ENCODE measurements at regions of chr1 and their contacts with region 1.

Region 1: DNA sequence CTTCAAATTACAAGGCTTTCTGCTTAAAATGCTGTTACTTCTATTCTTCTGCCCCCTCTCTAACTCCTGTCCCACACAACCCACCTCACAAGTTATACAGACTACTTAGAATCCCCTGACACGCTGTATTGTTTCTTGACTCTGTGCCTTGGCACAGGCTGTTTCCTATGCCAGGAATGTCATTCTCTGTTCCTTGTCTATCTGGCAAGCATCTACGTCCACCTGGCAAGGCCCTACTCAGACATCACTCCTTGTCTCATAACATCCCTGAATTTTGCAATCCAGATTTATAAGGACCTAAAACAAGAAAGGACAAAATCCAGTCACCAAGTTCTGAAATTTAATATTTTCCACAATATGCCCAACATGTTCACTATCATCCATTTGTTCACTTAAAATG is 182.0 kb upstream of the CHRM3 start:
- ATAC-seq: no peak
- H3K4me3 ChIP-seq: no peak overlapping the region
- H3K27ac ChIP-seq: no peak overlapping the region
- H3K4me1 ChIP-seq: peaks cover under 1 to 3% of the 10 kb centered on the region in 2 donors

Region 2: DNA sequence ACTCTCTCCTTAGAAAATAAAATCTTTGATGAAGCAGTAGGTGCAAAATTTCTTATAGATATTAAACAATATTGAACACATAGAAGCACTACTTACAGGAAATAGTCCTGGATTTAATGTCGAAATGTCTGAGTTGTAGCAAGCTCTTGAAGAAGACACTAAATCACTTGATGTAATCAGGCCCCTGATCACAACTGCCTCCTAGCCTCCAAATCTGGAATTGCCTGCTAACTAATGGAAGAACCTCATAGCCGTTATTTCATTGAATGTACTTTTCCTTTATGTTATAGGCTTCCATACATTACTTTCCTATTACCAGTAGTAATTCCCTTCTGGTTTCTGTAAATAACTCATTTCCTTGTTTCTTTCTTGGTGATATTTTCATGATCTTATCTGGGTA is 493.7 kb before region 1 on chr1:
- in situ Hi-C with region 1: no loop called
- ATAC-seq: no peak
- H3K4me3 ChIP-seq: no peak overlapping the region
- H3K27ac ChIP-seq: no peak overlapping the region
- H3K4me1 ChIP-seq: no peaks in the 10 kb centered on the region

Region 3: GRCh38 chr1:239262538-239262937 is 58.1 kb after region 1 on chr1:
- in situ Hi-C with region 1: loop called in 1 of 9 experiments (anchors 10 kb)
- ATAC-seq: no peak
- H3K4me3 ChIP-seq: no peak overlapping the region
- H3K27ac ChIP-seq: no peak overlapping the region
- H3K4me1 ChIP-seq: peaks cover 10 to 32% of the 10 kb centered on the region in 2 donors

Region 4: DNA sequence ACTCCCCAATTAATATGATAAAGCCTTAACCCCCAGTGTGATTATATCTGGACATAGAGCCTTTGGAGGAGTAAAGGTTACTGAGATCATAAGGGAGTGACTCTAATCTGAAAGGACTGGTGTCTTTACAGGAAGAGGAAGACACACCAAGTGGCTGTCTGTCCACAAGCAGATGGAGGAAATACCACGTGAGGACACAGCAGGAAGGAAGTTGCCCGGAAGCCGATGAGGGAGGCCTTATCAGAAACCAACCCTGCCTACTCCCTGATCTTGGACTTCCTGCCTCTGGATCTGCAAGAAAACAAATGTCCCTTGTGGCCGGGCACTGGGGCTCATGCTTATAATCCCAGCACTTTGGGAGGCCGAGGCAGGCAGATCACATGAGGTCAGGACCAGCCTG is 71.7 kb after region 1 on chr1:
- in situ Hi-C with region 1: no loop called
- ATAC-seq: no peak
- H3K4me3 ChIP-seq: no peak overlapping the region
- H3K27ac ChIP-seq: no peak overlapping the region
- H3K4me1 ChIP-seq: no peaks in the 10 kb centered on the region

Measured in motor neuron (in vitro differentiated cells).